A549 (cell line): ENCODE measurements at regions of chr14 and their contacts with region 1.

Region 1: GRCh38 chr14:74249433-74250375 is 10.5 kb downstream of the VSX2 start:
- DNase-seq: peak in 1 of 2 experiments; percentile 34
- ATAC-seq: no peak
- H3K4me3 ChIP-seq: no peak overlapping the region
- H3K27ac ChIP-seq: 0 out of 6 replicates have a peak overlapping the region, but pooled peaks of 1 of the 2 experiments have one; percentile 6
- H3K4me1 ChIP-seq: peaks cover 13% of the 10 kb centered on the region; the same call in 1 of the 3 replicates
- CTCF ChIP-seq: no peak
- EP300 ChIP-seq: no peak
- POLR2A ChIP-seq: no peak
- RAD21 ChIP-seq: no peak

Region 2: GRCh38 chr14:74223016-74223415 is 26.7 kb before region 1 on chr14:
- CTCF ChIA-PET with region 1: interaction called, 33 read pairs
- POLR2A ChIA-PET with region 1: no interaction called
- DNase-seq: no peak
- ATAC-seq: no peak
- H3K4me3 ChIP-seq: no peak overlapping the region
- H3K27ac ChIP-seq: no peak overlapping the region
- H3K4me1 ChIP-seq: no peaks in the 10 kb centered on the region
- CTCF ChIP-seq: no peak
- EP300 ChIP-seq: no peak
- POLR2A ChIP-seq: no peak
- RAD21 ChIP-seq: no peak

Region 3: DNA sequence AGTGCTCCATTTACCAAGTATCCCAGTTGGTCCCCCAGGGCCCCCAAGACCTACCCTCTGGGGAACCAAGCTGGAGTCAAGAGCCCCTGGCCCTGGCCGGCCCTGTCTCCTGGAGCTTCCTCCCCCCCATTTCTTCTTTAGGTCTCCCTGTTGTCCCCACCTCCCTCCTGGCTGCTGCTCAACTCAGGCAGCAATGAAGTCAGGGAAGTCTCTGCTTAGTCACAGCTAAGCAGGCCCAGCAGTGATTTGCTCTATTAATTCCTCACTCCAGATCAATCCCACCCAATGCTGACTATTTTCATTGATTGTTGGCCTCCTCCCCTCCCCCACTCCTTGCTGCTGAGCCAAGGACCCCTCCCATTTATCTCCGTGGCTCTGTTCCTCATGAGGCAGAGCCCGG is 17.9 kb after region 1 on chr14:
- CTCF ChIA-PET with region 1: interaction called, 13 read pairs
- POLR2A ChIA-PET with region 1: no interaction called
- DNase-seq: no peak
- ATAC-seq: no peak
- H3K4me3 ChIP-seq: no peak overlapping the region
- H3K27ac ChIP-seq: no peak overlapping the region
- H3K4me1 ChIP-seq: peaks cover 9% of the 10 kb centered on the region
- CTCF ChIP-seq: no peak
- EP300 ChIP-seq: no peak
- POLR2A ChIP-seq: no peak
- RAD21 ChIP-seq: no peak

Region 4: GRCh38 chr14:74346341-74346740 is 96.6 kb after region 1 on chr14:
- CTCF ChIA-PET with region 1: no interaction called
- POLR2A ChIA-PET with region 1: no interaction called
- DNase-seq: no peak
- ATAC-seq: peak; percentile 48 to 71; a peak in 4 of 6 replicates
- H3K4me3 ChIP-seq: no peak overlapping the region
- H3K27ac ChIP-seq: no peak overlapping the region
- H3K4me1 ChIP-seq: no peaks in the 10 kb centered on the region
- CTCF ChIP-seq: no peak
- EP300 ChIP-seq: no peak
- POLR2A ChIP-seq: no peak
- RAD21 ChIP-seq: no peak